BJ (cell line): ENCODE measurements at regions of chr19 and their contacts with region 1.

Region 1: GRCh38 chr19:42108527-42109389 is 23.5 kb downstream of the POU2F2 start:
- DNase-seq: no peak
- H3K4me3 ChIP-seq: no peak overlapping the region
- H3K27me3 ChIP-seq: no peaks in the 10 kb centered on the region
- CTCF ChIP-seq: peak; percentile 100

Region 2: GRCh38 chr19:42132851-42133528 is 24.2 kb after region 1 on chr19:
- CTCF ChIA-PET with region 1: interaction called, 89 read pairs
- POLR2A ChIA-PET with region 1: no interaction called
- DNase-seq: no peak
- H3K4me3 ChIP-seq: peak overlapping the region; percentile 33
- H3K27me3 ChIP-seq: peaks cover 2% of the 10 kb centered on the region; the same call in 1 of the 2 replicates
- CTCF ChIP-seq: peak; percentile 89

Region 3: DNA sequence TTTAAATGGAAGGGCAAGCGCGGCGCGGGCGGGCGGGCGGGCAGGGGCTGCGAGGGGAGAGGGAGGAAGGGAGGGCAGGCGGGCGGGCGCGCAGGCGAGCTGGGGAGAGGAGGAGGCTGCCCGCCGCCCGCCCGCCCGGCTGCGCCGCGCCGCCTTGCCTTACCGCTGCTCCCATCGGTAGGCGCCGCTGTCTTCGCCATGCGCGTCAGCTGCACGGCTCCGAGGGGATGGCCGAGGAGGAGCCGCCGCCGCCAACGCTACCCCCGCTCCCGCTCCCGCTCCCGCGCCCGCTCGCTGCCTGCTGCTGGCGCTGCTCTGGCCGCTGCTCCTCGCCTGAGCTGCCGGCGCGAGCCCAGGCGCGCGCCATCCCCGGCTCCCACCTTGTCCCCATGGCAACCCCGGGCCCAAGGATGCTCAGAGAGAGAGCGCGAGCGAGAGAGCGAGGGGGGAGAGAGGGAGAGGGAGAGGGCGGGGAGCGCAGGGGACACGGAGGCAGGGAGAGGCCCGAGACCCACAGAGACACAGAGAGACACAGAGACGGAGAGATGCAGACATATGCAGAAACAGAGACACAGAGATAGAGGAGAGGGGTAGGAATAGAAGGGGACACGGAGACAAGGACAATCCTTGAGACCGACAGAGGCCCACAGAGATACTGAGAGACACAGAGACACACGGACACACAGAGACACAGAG is 68.4 kb after region 1 on chr19:
- CTCF ChIA-PET with region 1: interaction called, 12 read pairs
- POLR2A ChIA-PET with region 1: no interaction called
- DNase-seq: no peak
- H3K4me3 ChIP-seq: peak overlapping the region; percentile 42
- H3K27me3 ChIP-seq: peaks cover 44% of the 10 kb centered on the region
- CTCF ChIP-seq: peak; percentile 37

Region 4: DNA sequence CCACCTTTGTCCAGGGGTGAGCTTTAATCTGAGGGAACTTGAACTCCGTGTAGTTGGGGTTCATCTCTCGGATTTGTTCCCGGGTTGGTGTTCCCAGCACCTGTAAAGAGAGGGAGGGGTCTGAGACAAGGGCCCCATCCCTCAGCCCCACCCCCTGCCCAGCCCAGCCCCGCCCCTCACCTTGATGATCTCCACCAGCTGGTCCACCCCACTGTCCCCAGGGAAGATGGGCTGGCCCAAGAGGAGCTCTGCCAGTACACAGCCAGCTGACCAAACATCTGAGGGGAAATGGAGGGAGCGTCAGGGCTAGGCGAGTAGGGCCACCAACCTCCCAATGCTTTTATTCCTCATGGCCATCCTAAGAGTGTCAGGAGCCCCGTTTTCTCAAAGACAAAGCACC is 124.3 kb after region 1 on chr19:
- CTCF ChIA-PET with region 1: interaction called, 17 read pairs
- POLR2A ChIA-PET with region 1: no interaction called
- DNase-seq: no peak
- H3K4me3 ChIP-seq: no peak overlapping the region
- H3K27me3 ChIP-seq: no peaks in the 10 kb centered on the region
- CTCF ChIP-seq: no peak